CD4-positive, alpha-beta T cell (primary cell): ENCODE measurements at regions of chr6 and their contacts with region 1.

Region 1: GRCh38 chr6:157946865-157947532 is 34.7 kb upstream of the SYNJ2 start:
- DNase-seq: peak in 3 of 14 experiments; percentile 21 to 57 (median 54)
- ATAC-seq: peak; percentile 80
- H3K4me3 ChIP-seq: no peak overlapping the region
- H3K4me3 Mint-ChIP-seq: no peak overlapping the region
- H3K27ac ChIP-seq: no peak overlapping the region
- H3K27ac Mint-ChIP-seq: peak overlapping the region; percentile 21
- H3K4me1 ChIP-seq: no peaks in the 10 kb centered on the region
- H3K4me1 Mint-ChIP-seq: peaks cover 4% of the 10 kb centered on the region
- H3K27me3 ChIP-seq: no peaks in the 10 kb centered on the region
- H3K27me3 Mint-ChIP-seq: no peaks in the 10 kb centered on the region
- CTCF ChIP-seq: peak; percentile 36

Region 2: DNA sequence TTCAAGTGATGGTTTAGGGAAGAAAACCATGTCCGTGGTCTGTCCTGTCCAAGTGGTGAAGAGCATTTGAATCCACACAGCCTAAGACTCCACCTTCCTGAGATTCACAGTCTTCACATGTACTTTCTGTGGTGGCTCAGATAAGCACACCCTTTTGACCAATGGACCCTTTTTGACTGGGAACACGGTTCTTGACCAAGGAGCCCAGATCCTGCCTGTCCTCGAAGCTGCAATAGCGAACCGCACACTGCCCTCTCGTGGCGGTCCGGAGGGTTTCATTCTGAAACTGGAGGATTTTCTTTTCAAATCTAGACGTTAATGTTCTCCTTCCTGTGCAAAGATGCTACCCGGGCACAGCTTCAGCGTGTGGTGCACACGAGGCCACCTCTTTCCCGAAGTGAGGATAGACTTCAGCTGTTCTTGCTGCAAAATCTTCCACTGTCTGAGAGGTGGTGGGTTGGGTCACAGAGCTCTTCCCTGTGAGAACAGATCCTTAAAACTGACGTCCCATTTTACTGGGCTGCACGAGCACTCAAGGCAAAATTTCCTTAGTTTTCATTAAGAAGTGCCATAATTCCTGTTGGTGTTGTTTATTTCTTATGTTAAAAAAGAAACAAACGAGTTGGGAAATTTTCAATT is 125.2 kb after region 1 on chr6:
- CTCF ChIA-PET with region 1: interaction called, 6 read pairs
- POLR2A ChIA-PET with region 1: no interaction called
- intact Hi-C with region 1: loop called in 1 of 2 experiments (anchors 5 kb)
- DNase-seq: peak; percentile 44 to 81 (median 62)
- ATAC-seq: peak; percentile 67
- H3K4me3 ChIP-seq: no peak overlapping the region
- H3K4me3 Mint-ChIP-seq: no peak overlapping the region
- H3K27ac ChIP-seq: no peak overlapping the region
- H3K27ac Mint-ChIP-seq: no peak overlapping the region
- H3K4me1 ChIP-seq: peaks cover 17% of the 10 kb centered on the region
- H3K4me1 Mint-ChIP-seq: peaks cover 6% of the 10 kb centered on the region
- H3K27me3 ChIP-seq: no peaks in the 10 kb centered on the region
- H3K27me3 Mint-ChIP-seq: no peaks in the 10 kb centered on the region
- CTCF ChIP-seq: peak; percentile 80

Region 3: GRCh38 chr6:158460602-158461169 is 513.7 kb after region 1 on chr6:
- CTCF ChIA-PET with region 1: no interaction called
- POLR2A ChIA-PET with region 1: no interaction called
- intact Hi-C with region 1: no loop called
- DNase-seq: no peak
- ATAC-seq: no peak
- H3K4me3 ChIP-seq: no peak overlapping the region
- H3K4me3 Mint-ChIP-seq: no peak overlapping the region
- H3K27ac ChIP-seq: no peak overlapping the region
- H3K27ac Mint-ChIP-seq: no peak overlapping the region
- H3K4me1 ChIP-seq: no peaks in the 10 kb centered on the region
- H3K4me1 Mint-ChIP-seq: no peaks in the 10 kb centered on the region
- H3K27me3 ChIP-seq: no peaks in the 10 kb centered on the region
- H3K27me3 Mint-ChIP-seq: no peaks in the 10 kb centered on the region
- CTCF ChIP-seq: no peak